CD4-positive, alpha-beta memory T cell (primary cell): ENCODE measurements at regions of chr18 and their contacts with region 1.

Region 1: DNA sequence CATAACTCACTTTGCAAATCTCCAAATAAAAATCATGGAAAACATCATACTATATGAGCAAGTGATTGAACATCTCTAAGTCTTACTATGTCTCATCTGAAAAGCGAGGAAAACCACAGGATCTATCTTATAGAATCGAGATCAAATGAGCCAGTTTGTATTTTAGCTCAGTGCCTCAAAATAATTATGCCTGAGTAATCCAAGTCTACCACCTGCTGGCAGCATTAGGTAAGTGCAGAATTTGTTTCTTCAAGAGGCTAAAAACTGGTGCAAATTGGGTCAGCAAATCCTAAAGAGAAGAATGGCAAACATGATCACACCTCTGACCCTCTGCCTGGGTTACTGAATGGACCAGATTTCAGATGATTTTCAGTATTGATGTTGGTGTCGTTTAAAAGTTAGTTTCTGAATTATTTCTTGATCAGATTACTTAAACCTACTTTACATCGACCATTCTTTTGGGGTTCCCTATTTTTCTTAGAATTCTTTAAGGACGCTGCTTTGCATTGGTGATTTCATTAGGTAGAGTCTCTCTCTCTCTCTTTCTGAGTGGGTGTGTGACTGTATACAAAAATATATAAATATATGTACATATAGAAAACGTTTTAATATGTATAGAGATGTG is 12.7 kb upstream of the FHOD3 start:
- DNase-seq: peak; percentile 51 to 58 (median 53)
- H3K4me3 ChIP-seq: no peak overlapping the region
- H3K4me3 Mint-ChIP-seq: no peak overlapping the region
- H3K27ac ChIP-seq: no peak overlapping the region
- H3K27ac Mint-ChIP-seq: no peak overlapping the region
- H3K4me1 ChIP-seq: no peaks in the 10 kb centered on the region
- H3K4me1 Mint-ChIP-seq: peaks cover 0 to 2% (median 0%) of the 10 kb centered on the region in 4 donors
- H3K27me3 ChIP-seq: no peaks in the 10 kb centered on the region
- H3K27me3 Mint-ChIP-seq: peaks cover 15 to 23% of the 10 kb centered on the region in 2 donors

Region 2: GRCh38 chr18:35407871-35408481 is 876.8 kb before region 1 on chr18:
- CTCF ChIA-PET with region 1: interaction called, 3 read pairs
- POLR2A ChIA-PET with region 1: no interaction called
- intact Hi-C with region 1: loop called (anchors 1 kb)
- DNase-seq: peak in 4 of 5 donors; percentile 48 to 66 (median 60)
- H3K4me3 ChIP-seq: no peak overlapping the region
- H3K4me3 Mint-ChIP-seq: no peak overlapping the region
- H3K27ac ChIP-seq: no peak overlapping the region
- H3K27ac Mint-ChIP-seq: no peak overlapping the region
- H3K4me1 ChIP-seq: peaks cover 4% of the 10 kb centered on the region
- H3K4me1 Mint-ChIP-seq: peaks cover 0 to 10% (median 9%) of the 10 kb centered on the region in 4 donors
- H3K27me3 ChIP-seq: no peaks in the 10 kb centered on the region
- H3K27me3 Mint-ChIP-seq: peaks cover 2 to 4% of the 10 kb centered on the region in 2 donors

Region 3: GRCh38 chr18:35756506-35757117 is 528.2 kb before region 1 on chr18:
- CTCF ChIA-PET with region 1: interaction called, 21 read pairs
- POLR2A ChIA-PET with region 1: no interaction called
- intact Hi-C with region 1: no loop called
- DNase-seq: peak in 4 of 5 donors; percentile 46 to 59 (median 58)
- H3K4me3 ChIP-seq: no peak overlapping the region
- H3K4me3 Mint-ChIP-seq: no peak overlapping the region
- H3K27ac ChIP-seq: no peak overlapping the region
- H3K27ac Mint-ChIP-seq: no peak overlapping the region
- H3K4me1 ChIP-seq: no peaks in the 10 kb centered on the region
- H3K4me1 Mint-ChIP-seq: no peaks in the 10 kb centered on the region
- H3K27me3 ChIP-seq: no peaks in the 10 kb centered on the region
- H3K27me3 Mint-ChIP-seq: peaks cover 11 to 17% of the 10 kb centered on the region in 2 donors

Region 4: DNA sequence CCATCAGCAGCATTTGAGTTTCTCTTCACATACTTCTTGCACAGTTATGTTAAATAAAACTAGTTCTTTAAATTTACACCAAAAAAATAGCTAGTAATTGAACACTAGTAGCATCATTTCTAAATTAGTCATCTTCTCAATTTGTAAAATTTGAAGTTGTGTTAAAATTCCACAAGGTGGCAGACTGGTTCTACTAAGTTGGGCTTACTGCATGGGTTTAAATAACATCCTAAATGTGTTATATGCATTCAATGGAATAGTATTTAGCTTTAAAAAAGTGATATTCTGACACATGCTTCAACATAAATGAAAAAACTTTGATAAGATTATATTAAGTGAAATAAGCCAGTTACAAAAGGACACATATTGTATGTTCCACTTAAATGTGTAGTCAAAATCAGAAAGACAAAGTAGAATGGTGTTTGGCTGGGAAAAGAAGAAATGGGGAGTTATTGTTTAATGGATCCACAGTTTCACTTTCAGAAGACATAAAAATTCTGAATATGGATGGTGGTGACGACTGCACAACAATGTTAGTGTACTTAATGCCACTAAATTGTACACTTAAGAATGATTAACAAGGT is 188.8 kb before region 1 on chr18:
- CTCF ChIA-PET with region 1: interaction called, 108 read pairs
- POLR2A ChIA-PET with region 1: no interaction called
- intact Hi-C with region 1: loop called (anchors 1 kb)
- DNase-seq: peak in 4 of 5 donors; percentile 42 to 47 (median 44)
- H3K4me3 ChIP-seq: no peak overlapping the region
- H3K4me3 Mint-ChIP-seq: no peak overlapping the region
- H3K27ac ChIP-seq: no peak overlapping the region
- H3K27ac Mint-ChIP-seq: no peak overlapping the region
- H3K4me1 ChIP-seq: no peaks in the 10 kb centered on the region
- H3K4me1 Mint-ChIP-seq: peaks cover 9 to 13% (median 11%) of the 10 kb centered on the region in 4 donors
- H3K27me3 ChIP-seq: no peaks in the 10 kb centered on the region
- H3K27me3 Mint-ChIP-seq: peaks cover 2 to 5% of the 10 kb centered on the region in 2 donors

Region 5: DNA sequence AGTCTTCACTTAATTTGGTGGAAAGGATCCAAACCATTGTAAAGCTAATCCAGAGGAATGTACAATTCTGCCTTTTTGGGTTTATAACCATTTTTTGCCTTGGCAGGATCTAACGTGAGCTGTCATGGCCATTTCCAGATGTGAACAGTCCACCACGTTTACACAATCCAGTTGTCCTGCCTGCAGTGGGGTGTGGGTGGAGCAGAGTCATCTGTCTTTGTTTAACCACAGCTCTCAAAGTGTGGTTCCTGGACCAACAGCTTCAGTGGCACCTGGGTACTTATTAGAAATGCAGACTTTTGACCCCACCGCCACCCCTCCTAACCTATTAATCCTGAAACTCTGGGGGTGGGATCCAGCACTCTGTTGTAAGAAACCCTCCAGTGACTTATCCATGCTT is 48.6 kb after region 1 on chr18:
- CTCF ChIA-PET with region 1: no interaction called
- POLR2A ChIA-PET with region 1: no interaction called
- intact Hi-C with region 1: no loop called
- DNase-seq: no peak
- H3K4me3 ChIP-seq: no peak overlapping the region
- H3K4me3 Mint-ChIP-seq: no peak overlapping the region
- H3K27ac ChIP-seq: no peak overlapping the region
- H3K27ac Mint-ChIP-seq: no peak overlapping the region
- H3K4me1 ChIP-seq: no peaks in the 10 kb centered on the region
- H3K4me1 Mint-ChIP-seq: no peaks in the 10 kb centered on the region
- H3K27me3 ChIP-seq: no peaks in the 10 kb centered on the region
- H3K27me3 Mint-ChIP-seq: peaks cover 7 to 20% of the 10 kb centered on the region in 2 donors